H1 (cell line): ENCODE measurements at regions of chr16 and their contacts with region 1.

Region 1: DNA sequence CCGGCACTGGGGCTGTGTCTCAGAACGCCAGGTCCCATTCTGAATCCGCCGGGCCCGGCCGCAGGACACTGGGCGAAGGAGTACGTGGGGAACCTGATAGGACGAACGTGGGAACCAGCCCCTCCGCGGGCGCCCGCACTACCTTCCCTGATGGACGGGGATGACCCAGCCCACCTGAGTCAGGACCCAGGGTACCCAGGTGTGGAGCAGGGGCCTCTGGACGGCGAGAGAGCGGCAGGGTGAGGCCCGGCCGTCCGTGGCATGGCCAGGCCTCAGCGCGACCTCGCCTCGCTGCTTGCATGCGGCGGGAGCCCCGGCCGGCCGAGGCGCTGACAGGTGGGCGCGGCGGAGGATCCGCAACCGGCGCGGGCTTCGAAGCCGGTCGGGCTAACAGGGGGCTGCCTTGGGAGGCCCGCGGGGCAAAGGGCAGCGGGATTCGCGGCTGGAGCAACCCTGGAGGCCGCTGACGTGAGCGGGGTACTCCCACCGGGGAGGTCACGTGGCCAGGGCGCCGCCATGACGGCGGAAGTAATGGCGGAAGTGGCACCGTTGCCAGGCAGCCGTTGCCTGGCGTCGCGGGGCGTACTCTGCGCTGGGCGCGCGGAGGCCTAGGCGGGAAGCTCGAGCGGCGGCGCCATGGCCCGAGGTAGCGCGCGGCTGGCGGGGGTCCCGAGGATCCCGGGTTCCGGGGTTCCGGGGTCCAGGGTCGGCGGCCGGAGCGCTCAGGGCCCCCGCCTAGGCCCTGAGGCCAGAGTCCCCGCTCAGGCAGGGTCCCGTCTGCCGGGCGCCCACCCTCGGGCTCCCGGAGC is at the start of gene WDR90:
- DNase-seq: peak in 1 of 2 experiments; percentile 97
- H3K4me3 ChIP-seq: peak within 1 kb of the TSS; percentile 59 to 76 (median 68)
- H3K27ac ChIP-seq: peak within 1 kb of the TSS; percentile 35; the same call in 1 of the 2 replicates
- H3K4me1 ChIP-seq: peaks cover 0 to 4% (median under 1%) of the 10 kb centered on the region in 4 experiments; a peak in 4 of 7 replicates
- H3K27me3 ChIP-seq: no peaks in the 10 kb centered on the region
- CTCF ChIP-seq: no peak
- EP300 ChIP-seq: no peak
- POLR2A ChIP-seq: peak in 1 of 2 experiments; percentile 49; a peak in 1 of 3 replicates
- RAD21 ChIP-seq: no peak
- total RNA-seq, gene WDR90: 44.4 and 47.2 TPM in 2 replicates

Region 2: GRCh38 chr16:636206-637080 is 12.5 kb before region 1 on chr16 and contains the start of gene METTL26:
- CTCF ChIA-PET with region 1: interaction called, 24 read pairs
- POLR2A ChIA-PET with region 1: interaction called, 13 read pairs
- DNase-seq: peak in 1 of 2 experiments; percentile 96
- H3K4me3 ChIP-seq: peak within 1 kb of the TSS; percentile 73 to 89 (median 77)
- H3K27ac ChIP-seq: peak within 1 kb of the TSS; percentile 35; the same call in 1 of the 2 replicates
- H3K4me1 ChIP-seq: peaks cover 0 to 29% (median 19%) of the 10 kb centered on the region in 4 experiments; a peak in 6 of 7 replicates
- H3K27me3 ChIP-seq: no peaks in the 10 kb centered on the region
- CTCF ChIP-seq: no peak
- EP300 ChIP-seq: no peak
- POLR2A ChIP-seq: peak in 1 of 2 experiments; percentile 51; a peak in 2 of 3 replicates
- RAD21 ChIP-seq: 0 out of 4 replicates have a peak, but pooled peaks of 1 of the 2 experiments have one; percentile 0
- total RNA-seq, gene METTL26: 100 and 108 TPM in 2 replicates

Region 3: GRCh38 chr16:667780-668518 is 19.0 kb after region 1 on chr16 and contains the start of gene RHOT2:
- CTCF ChIA-PET with region 1: interaction called, 104 read pairs
- POLR2A ChIA-PET with region 1: interaction called, 8 read pairs
- DNase-seq: peak; percentile 47 to 94
- H3K4me3 ChIP-seq: peak within 1 kb of the TSS; percentile 71 to 89 (median 76)
- H3K27ac ChIP-seq: peak within 1 kb of the TSS; percentile 23; the same call in 1 of the 2 replicates
- H3K4me1 ChIP-seq: peaks cover 0 to 8% (median 5%) of the 10 kb centered on the region in 4 experiments; a peak in 5 of 7 replicates
- H3K27me3 ChIP-seq: no peaks in the 10 kb centered on the region
- CTCF ChIP-seq: peak in 2 of 3 experiments; percentile 85 to 99; a peak in 3 of 4 replicates
- EP300 ChIP-seq: peak in 1 of 2 experiments; percentile 82; a peak in 1 of 3 replicates
- POLR2A ChIP-seq: no peak; a peak in 1 of 3 replicates
- RAD21 ChIP-seq: peak; percentile 34 to 65; a peak in 3 of 4 replicates
- total RNA-seq, gene RHOT2: 149 and 162 TPM in 2 replicates